Heart left ventricle (tissue), 16 donors: ENCODE measurements at regions of chr9 and their contacts with region 1.

Region 1: GRCh38 chr9:99353408-99353807 is 131.3 kb downstream of the SEC61B start:
- DNase-seq: no peak
- ATAC-seq: no peak
- H3K4me3 ChIP-seq: no peak overlapping the region
- H3K27ac ChIP-seq: no peak overlapping the region
- H3K4me1 ChIP-seq: peaks cover 0 to 30% (median 5%) of the 10 kb centered on the region in 12 donors
- H3K27me3 ChIP-seq: no peaks in the 10 kb centered on the region
- CTCF ChIP-seq: no peak
- POLR2A ChIP-seq: no peak

Region 2: DNA sequence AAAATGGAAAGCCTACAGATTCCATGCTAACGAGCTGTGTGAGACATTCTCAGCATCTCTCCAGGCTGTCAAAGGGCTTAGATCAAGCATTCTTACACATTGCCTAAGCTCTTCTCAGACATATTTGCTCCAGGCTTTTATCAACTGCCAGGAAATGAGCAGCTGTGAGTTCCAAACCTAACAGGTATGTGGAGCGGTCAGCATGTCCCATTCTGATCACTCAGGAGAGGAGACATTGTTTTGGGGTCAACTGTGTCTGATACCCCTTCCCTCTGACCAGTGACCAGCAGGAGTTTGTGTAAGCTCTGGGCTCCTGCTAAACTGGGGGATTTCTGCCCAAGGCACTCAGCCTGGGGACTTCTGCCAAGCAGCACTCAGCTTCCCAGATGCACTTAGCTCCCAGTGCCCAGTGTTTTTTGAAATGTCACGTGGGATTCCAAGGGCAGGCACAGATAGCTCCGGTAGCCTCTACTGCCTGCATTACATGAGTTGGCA is 97.8 kb after region 1 on chr9:
- intact Hi-C with region 1: loop called in 2 of 10 experiments (anchors 2 to 5 kb)
- DNase-seq: peak in 4 of 5 donors; percentile 49 to 82 (median 66)
- ATAC-seq: peak; percentile 97 to 99 (median 98)
- H3K4me3 ChIP-seq: no peak overlapping the region
- H3K27ac ChIP-seq: peak overlapping the region in 11 of 12 donors; percentile 34 to 84 (median 69)
- H3K4me1 ChIP-seq: peaks cover 0 to 15% (median 2%) of the 10 kb centered on the region in 12 donors
- H3K27me3 ChIP-seq: no peaks in the 10 kb centered on the region
- CTCF ChIP-seq: no peak
- POLR2A ChIP-seq: no peak

Region 3: DNA sequence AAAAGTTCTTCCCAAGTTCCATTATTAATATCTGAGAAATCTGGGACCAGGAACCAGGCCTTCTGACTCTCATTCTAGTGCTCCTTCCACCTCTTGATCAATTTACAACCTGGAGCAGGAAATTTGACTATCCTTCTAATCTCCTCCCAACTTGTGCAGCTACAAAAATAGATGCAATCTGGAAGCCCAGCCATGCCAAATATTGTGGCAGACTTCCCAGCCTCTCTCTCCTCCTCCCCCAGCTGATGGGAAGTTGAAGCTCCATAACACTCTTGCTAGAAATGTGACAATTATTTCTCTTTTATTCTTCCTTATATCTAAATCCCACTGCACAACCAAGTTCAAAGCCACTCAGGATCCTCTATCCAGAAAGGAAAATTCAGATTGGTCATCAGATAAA is 120.8 kb after region 1 on chr9:
- intact Hi-C with region 1: loop called in 1 of 10 experiments (anchors 5 kb)
- DNase-seq: peak in 3 of 5 donors; percentile 36 to 47 (median 38)
- ATAC-seq: peak in 2 of 4 donors; percentile 45 to 57
- H3K4me3 ChIP-seq: no peak overlapping the region
- H3K27ac ChIP-seq: no peak overlapping the region
- H3K4me1 ChIP-seq: peaks cover 0 to 19% (median 3%) of the 10 kb centered on the region in 12 donors
- H3K27me3 ChIP-seq: no peaks in the 10 kb centered on the region
- CTCF ChIP-seq: no peak
- POLR2A ChIP-seq: no peak

Region 4: DNA sequence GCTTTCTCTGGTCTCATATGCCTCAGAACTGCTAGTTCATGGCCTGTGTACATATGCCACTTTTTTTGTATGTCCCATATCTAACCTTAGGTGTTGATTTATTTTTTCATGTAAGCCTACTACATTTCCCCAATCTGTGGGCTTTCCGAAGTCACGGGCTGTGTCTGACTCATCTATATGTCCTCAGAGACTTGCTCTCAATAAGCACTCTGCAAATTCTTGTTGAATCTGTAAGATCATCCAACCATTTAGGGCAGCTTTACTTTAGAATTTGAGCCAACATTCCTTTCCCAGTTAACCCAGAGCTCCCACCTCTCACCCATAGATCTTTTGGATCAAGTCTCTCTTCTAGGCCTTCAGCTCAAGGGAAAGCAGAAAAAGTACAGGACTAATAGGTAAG is 132.1 kb after region 1 on chr9:
- intact Hi-C with region 1: no loop called
- DNase-seq: no peak
- ATAC-seq: no peak
- H3K4me3 ChIP-seq: no peak overlapping the region
- H3K27ac ChIP-seq: no peak overlapping the region
- H3K4me1 ChIP-seq: no peaks in the 10 kb centered on the region
- H3K27me3 ChIP-seq: no peaks in the 10 kb centered on the region
- CTCF ChIP-seq: no peak
- POLR2A ChIP-seq: no peak